MCF 10A (cell line): ENCODE measurements at regions of chr11 and their contacts with region 1.

Region 1: GRCh38 chr11:65606876-65607613 is 7.0 kb downstream of the MAP3K11 start:
- DNase-seq: no peak
- H3K4me3 Mint-ChIP-seq: no peak overlapping the region
- H3K27ac Mint-ChIP-seq: no peak overlapping the region
- H3K4me1 Mint-ChIP-seq: peaks cover 24% of the 10 kb centered on the region
- H3K27me3 Mint-ChIP-seq: no peaks in the 10 kb centered on the region
- CTCF ChIP-seq: no peak

Region 2: GRCh38 chr11:65593518-65594298 is 13.3 kb before region 1 on chr11:
- CTCF ChIA-PET with region 1: interaction called, 23 read pairs
- POLR2A ChIA-PET with region 1: interaction called, 4 read pairs
- intact Hi-C with region 1: no loop called
- DNase-seq: no peak
- H3K4me3 Mint-ChIP-seq: no peak overlapping the region
- H3K27ac Mint-ChIP-seq: no peak overlapping the region
- H3K4me1 Mint-ChIP-seq: peaks cover 5% of the 10 kb centered on the region
- H3K27me3 Mint-ChIP-seq: no peaks in the 10 kb centered on the region
- CTCF ChIP-seq: peak; percentile 56